Activated T-helper 2 cell treated with anti-CD3 and anti-CD28 coated beads, Interferon-gamma antibody, Interleukin-2, Interleukin-4, amounts not matched to agents 10 μg/mL and 5 μg/mL and 100 μg/mL, durations not matched to agents 14 hours and 24 hours and 36 hours (primary cell): ENCODE measurements at regions of chr22 and their contacts with region 1.

Region 1: DNA sequence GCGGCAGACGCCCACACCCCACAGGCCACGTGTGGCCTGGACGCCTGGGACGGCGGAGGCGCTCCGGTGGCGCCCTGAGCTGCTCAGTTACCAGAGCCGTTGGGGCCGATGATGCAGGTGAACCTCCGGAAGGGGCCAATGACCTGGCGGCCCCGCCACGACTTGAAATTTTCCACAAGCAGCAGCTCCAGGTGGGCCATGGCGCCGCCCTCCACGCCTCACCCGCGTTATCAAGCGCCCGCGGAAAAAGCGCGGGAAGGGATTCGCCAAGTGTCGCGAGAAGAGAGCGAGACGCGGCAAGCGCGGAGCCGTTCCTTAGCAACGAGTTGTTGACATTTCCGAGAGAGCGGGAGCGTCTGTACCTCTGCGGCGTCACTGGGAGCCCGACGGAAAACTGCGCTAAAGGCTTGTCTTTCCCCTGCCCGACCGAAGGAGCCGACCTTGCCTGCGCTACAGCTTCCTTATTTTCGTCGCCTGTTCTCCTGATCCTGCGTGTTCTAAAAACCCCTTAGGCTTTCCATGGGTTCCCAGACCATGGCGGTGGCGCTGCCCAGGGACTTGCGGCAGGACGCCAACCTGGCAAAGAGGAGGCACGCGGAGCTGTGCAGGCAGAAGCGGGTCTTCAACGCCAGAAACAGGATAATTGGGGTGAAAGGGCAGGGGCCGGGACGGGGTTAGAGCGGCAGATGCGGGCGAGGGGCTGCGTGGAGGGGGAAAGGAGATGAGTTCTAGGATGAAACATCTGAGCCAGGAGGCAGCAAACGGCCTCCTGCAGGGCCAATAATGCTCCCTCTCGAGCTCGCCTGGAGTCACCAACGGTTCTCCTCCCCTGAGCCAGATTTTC is at the starts of genes RIBC2 and SMC1B:
- DNase-seq: peak; percentile 90
- H3K4me3 Mint-ChIP-seq: peak within 1 kb of the TSS; percentile 90
- H3K27ac Mint-ChIP-seq: peak within 1 kb of the TSS; percentile 89
- H3K4me1 Mint-ChIP-seq: peaks cover 16% of the 10 kb centered on the region
- H3K27me3 Mint-ChIP-seq: peaks cover 3% of the 10 kb centered on the region
- total RNA-seq, gene RIBC2: 9.9 and 11.0 TPM in 2 replicates
- total RNA-seq, gene SMC1B: 0.50 and 0.80 TPM in 2 replicates

Region 2: DNA sequence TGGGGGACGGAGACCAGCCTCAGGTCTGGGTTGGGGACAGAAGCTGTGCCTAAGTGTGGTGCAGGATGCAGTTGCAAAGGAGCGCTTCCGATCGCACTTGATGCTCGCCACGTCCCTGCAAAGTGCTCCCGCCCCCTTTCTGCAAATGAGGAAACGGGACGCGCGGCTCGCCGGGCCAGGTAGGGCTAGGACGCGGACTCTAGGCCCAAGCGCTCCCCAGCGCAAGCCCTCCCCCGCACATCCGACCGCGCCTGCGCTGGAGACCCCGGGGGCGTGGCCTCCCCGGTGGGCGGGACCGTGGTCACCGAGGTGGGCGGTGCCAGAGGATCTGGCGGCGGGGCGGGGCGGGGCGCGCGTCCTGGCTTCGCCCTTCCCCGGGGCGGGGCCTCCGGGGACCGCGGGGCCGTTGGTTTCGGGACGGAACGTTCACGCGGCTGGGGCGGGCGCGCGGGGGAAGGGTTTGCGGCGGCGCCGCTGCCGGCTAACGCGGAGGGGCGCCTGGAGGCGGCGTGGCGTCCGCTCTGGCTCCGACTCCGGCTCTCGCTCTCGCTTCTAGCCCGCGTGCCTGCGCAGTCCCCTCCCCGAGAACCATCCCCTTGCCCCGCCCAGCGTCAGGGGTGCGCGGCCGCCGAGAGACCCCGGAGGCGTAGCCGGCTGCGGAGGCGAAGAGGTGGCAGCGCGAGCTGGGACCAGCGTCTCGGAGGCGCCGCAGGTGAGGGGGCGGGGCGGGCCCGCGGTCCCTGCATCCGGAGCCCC is 103.9 kb before region 1 on chr22 and contains the start of gene FAM118A:
- intact Hi-C with region 1: loop called (anchors 10 kb)
- DNase-seq: peak; percentile 96
- H3K4me3 Mint-ChIP-seq: peak within 1 kb of the TSS; percentile 84
- H3K27ac Mint-ChIP-seq: peak within 1 kb of the TSS; percentile 92
- H3K4me1 Mint-ChIP-seq: peaks cover 37% of the 10 kb centered on the region
- H3K27me3 Mint-ChIP-seq: no peaks in the 10 kb centered on the region
- total RNA-seq, gene FAM118A: 30.7 and 37.5 TPM in 2 replicates

Region 3: GRCh38 chr22:45358127-45358526 is 55.5 kb before region 1 on chr22:
- intact Hi-C with region 1: loop called (anchors 5 kb)
- DNase-seq: no peak
- H3K4me3 Mint-ChIP-seq: no peak overlapping the region
- H3K27ac Mint-ChIP-seq: no peak overlapping the region
- H3K4me1 Mint-ChIP-seq: peaks cover 17% of the 10 kb centered on the region
- H3K27me3 Mint-ChIP-seq: peaks cover 7% of the 10 kb centered on the region

Region 4: DNA sequence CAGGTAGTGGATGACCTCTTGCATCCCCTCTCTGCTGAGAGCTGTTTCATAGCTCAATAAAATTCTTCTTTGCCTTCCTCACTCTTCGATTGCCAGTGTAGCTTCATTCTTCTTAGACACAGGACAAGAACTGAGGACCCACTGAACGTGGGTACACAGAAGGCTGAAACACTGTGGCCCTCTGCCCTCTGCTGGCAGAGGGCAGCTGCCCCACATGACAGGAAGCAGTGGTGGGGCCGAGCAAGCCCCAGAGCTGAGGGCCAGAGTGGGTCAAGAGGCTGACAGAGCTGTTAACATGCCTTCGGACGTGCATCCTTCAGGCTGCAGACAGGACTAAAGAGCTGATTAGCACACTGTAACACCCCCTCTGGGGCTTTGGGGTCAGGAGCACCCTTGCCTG is 15.8 kb before region 1 on chr22:
- intact Hi-C with region 1: no loop called
- DNase-seq: no peak
- H3K4me3 Mint-ChIP-seq: no peak overlapping the region
- H3K27ac Mint-ChIP-seq: no peak overlapping the region
- H3K4me1 Mint-ChIP-seq: no peaks in the 10 kb centered on the region
- H3K27me3 Mint-ChIP-seq: peaks cover 4% of the 10 kb centered on the region

Region 5: GRCh38 chr22:45878051-45878781 is 464.6 kb after region 1 on chr22:
- intact Hi-C with region 1: no loop called
- DNase-seq: no peak
- H3K4me3 Mint-ChIP-seq: no peak overlapping the region
- H3K27ac Mint-ChIP-seq: no peak overlapping the region
- H3K4me1 Mint-ChIP-seq: no peaks in the 10 kb centered on the region
- H3K27me3 Mint-ChIP-seq: peaks cover 39% of the 10 kb centered on the region